ENCODE measurements at regions of chr19 and their contacts with region 1.

Region 1: GRCh38 chr19:6516659-6517291 is 14.1 kb upstream of the TNFSF9 start:
- DNase-seq: peak; percentile 93
- H3K4me3 ChIP-seq: peak overlapping the region; percentile 41 to 62 (median 61)
- H3K27ac ChIP-seq: peak overlapping the region; percentile 68 to 81 (median 72)
- H3K4me1 ChIP-seq: peaks cover 0 to 10% (median 5%) of the 10 kb centered on the region in 4 donors
- H3K27me3 ChIP-seq: no peaks in the 10 kb centered on the region
- CTCF ChIP-seq: peak; percentile 96 to 99 (median 97)
- EP300 ChIP-seq: no peak
- POLR2A ChIP-seq: no peak

Region 2: DNA sequence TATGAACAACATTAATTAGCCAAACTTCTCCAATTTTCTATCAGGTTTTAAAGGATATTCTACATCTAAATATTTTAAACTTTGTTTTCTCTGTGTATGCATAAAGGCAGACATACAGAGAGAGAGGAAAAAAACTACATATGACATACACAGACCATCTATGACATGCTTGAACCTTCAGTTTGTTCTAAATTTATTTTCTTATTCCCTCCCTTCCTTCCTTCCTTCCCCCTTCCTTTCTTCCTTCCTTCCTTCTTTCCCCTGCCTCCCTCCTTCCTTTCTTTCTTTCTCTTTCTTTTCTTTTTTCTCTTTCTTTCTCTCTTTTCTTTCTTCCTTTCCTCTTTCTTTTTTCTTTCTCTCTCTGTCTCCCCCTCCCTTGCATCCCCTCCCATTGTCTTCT is 110.0 kb after region 1 on chr19:
- in situ Hi-C with region 1: loop called (anchors 10 to 25 kb)
- intact Hi-C with region 1: no loop called
- DNase-seq: no peak
- H3K4me3 ChIP-seq: no peak overlapping the region
- H3K27ac ChIP-seq: no peak overlapping the region
- H3K4me1 ChIP-seq: no peaks in the 10 kb centered on the region
- H3K27me3 ChIP-seq: peaks cover 5% of the 10 kb centered on the region
- CTCF ChIP-seq: no peak
- EP300 ChIP-seq: no peak
- POLR2A ChIP-seq: no peak

Region 3: DNA sequence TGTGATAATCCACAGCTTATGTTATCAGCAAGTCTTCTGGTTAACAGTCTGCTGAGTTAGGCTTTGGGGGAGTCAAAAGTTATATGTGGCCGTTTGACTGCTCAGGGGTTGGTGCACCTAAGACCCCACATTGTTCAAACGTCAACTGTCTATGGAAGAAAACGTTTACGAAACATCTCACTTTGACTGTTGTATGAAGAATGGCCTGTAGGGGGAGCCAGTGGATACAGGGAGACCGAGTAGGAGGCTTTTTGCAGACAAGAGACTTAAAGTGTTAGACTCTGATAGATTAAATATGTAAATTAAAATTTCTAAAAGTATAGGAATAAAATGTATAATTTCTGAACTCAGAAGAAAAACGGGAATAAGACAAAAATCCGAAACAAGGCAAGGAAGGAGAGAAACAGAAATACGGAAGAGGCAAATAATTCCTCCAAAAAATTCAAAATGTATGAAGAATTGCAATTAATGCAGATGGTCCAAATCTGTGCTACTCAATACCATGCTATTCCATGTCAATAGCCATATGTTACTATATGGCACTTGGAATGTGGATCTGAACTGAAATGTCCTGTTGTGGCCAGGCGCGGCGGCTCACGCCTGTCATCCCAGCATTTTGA is 115.3 kb after region 1 on chr19:
- in situ Hi-C with region 1: loop called (anchors 10 to 25 kb)
- intact Hi-C with region 1: no loop called
- DNase-seq: peak; percentile 77
- H3K4me3 ChIP-seq: no peak overlapping the region
- H3K27ac ChIP-seq: no peak overlapping the region
- H3K4me1 ChIP-seq: no peaks in the 10 kb centered on the region
- H3K27me3 ChIP-seq: peaks cover 5% of the 10 kb centered on the region
- CTCF ChIP-seq: peak; percentile 78 to 87 (median 84)
- EP300 ChIP-seq: no peak
- POLR2A ChIP-seq: no peak

Measured in transverse colon (tissue), 4 donors.